Left cardiac atrium (tissue), 4 donors: ENCODE measurements at regions of chr6 and their contacts with region 1.

Region 1: DNA sequence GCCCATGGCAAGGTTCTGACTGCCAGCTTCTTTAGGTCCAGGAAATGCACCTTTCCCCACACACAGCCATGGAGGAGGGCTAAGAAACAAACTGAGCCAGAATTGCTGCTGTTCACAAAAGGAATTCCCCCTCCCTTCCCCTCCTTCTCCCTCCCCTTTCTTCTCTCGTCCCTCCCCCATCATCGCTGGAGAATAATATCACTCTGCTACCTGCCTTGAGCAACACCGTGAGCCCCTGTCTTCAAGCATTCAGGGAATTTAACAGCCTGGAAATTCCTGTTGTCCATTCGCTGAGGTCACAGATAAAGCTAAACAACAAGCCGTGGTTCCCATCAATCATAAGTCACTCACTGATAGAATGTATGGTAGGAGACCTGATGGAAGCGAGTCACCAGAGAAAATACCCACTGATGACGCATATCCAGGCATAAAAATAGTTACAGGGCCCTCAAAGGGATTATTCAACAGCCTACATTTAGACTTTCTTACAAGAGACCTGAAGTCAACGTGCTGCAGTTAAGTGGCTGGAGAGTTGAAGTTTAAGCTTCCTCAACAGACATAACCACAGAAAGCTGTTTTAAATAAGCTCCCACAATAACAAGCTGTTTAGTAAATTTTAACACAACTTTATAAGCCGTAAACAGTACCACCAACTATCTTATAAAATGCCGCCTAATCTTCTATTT is 59.7 kb downstream of the HIVEP2 start:
- DNase-seq: peak; percentile 35
- ATAC-seq: peak; percentile 89 to 91

Region 2: GRCh38 chr6:142819603-142820337 is 65.6 kb before region 1 on chr6:
- intact Hi-C with region 1: loop called in 1 of 2 experiments (anchors 10 kb)
- DNase-seq: no peak
- ATAC-seq: peak; percentile 39 to 62

Region 3: DNA sequence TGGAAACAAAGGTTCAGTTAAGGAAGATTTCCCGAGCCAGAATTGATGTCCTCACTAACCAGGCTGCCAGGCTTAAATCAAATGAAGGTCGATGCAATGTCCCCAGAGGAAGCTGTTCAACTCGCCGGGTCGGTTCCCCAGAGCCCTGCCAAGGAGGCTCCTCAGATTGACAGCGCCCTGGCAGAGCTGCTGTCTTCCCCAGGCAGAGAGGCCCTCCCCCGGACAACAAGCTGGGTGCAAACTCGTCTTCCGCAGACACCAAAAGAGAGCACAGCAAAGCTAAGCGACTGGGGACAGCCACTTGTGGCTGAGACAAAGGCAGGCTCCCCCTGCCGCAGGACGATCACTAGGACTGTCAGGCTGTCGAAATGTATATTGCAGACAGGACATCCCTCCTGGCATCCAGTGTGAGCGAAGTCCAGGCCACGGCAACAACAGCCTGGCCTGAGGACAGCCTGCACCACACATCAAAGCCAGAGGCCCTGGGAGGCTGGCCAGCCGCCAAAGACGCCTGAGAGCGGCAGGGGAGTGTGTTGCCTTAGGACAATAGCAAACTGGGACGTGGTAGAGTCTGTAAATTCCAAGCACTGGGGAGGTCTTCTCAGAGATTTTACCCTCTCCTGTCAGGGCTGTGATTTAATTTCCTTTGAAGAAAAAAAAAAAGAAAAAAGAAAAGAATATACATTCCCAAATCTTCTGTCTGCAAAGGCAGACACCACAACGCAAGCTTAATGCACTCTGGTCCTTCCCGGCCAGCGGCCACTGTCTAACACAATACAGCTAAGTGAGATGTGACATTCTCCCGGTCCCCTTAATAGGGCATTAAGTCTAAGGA is 39.5 kb before region 1 on chr6:
- intact Hi-C with region 1: loop called in 1 of 2 experiments (anchors 5 kb)
- DNase-seq: peak; percentile 92
- ATAC-seq: peak; percentile 94

Region 4: DNA sequence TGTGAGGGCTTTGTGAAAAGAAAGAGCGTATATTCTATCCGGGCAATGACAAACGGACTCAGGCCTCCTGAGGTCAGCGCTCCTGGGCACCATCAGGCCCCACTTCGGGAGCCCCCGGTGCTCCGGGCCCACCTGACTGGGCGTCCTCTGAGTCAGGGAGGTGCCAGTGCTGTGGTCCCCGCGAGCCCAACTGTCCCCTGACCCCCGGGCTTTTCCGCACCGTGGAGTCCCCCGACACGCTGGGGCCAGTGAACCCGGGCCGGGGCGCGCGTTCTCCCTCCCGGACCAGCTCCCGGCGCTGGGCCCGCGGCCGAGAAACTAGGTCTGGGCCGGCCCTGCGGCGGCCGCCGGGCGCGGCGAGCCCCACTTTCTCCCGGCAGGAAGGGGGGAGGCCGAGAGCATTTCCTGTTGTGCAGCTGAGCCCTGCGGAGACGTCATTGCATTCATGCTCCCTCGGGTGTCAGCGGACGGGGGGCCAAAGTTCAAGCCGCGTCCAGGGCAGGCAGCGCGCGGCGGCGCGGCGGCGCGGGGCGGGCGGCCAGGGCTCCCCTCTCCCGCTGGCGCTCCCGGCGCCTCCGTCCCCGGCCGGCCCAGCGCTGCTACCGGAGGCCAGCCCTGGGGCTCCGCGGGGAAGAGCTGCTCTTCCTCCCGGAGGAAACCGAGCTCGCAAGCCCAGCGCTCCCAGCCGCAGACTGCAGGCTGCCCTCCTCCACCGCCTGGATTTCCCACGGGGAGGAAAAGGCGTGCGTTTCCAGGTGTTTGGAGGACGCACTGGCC is 41.4 kb after region 1 on chr6:
- intact Hi-C with region 1: no loop called
- DNase-seq: peak; percentile 93
- ATAC-seq: peak; percentile 94 to 96

Region 5: DNA sequence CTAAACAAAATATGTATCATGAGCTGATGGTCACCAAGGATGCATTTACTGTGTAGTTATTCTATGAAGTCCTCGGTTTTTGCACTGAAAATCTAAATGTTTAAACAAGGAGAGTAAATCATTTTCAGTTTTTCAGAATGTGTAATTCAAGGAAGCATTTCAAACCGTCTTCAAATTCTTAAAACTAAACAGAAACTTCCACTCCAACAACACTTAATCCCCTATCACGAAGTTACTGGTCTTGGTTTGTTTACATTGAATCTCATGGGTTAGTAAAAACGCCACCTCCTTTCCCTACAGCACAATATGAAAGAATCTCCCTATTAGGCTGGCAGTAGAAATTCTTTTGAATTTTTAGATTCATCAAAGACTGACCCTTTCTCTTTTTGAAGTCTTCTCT is 368.3 kb after region 1 on chr6:
- intact Hi-C with region 1: no loop called
- DNase-seq: no peak
- ATAC-seq: no peak

Region 6: GRCh38 chr6:143325379-143326140 is 440.2 kb after region 1 on chr6:
- intact Hi-C with region 1: no loop called
- DNase-seq: no peak
- ATAC-seq: peak in 1 of 2 donors; percentile 44